Caco-2 (cell line): ENCODE measurements at regions of chr13 and their contacts with region 1.

Region 1: DNA sequence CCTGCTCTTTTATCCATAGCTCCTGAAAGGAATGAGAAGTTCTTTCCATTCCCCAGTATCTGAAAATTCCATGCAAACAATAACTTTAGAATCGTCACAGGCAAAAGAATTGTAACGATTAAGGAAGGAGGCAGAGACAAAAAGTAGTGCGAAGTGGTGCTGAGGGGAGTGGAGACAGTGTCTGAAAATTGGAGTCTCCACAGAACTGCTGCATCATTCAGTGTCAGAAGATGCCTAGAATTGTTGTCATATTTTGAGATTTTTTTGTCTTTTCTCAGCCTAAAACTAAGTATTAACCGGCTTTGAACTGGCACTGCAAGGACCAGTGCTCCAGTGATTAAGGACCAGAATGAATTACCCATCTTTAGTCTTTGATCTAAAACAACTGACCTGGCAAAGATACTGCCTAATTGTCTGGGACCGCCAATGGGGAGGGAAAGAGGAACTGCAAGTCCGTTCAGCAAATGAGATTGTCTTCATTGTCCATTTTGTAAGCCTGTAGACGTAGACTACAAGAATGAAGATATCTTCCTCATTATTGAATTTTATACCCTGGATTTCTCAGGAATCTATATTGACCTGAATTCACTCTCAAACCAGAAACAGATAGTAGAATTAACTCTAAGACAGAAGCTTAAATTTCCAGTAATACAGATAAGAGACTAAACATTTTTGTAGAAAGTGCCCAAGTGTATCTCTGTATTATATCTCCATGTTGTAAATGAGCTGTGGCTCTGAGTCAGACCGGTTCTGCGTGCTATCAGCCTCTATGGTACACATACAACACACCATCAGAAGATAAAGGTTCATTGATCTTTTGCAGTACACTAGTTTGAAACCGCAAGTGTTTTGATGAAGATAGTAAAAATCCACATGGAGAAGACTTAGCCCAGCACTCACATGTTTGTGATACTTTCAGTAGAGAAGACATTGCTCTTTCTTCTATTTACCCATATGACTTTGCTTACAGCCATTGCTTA is 293.2 kb downstream of the EFNB2 start:
- DNase-seq: peak; percentile 63 to 72
- H3K4me3 ChIP-seq: no peak overlapping the region; the same call in 1 of the 2 replicates
- H3K4me3 Mint-ChIP-seq: peak overlapping the region; percentile 69
- H3K27ac Mint-ChIP-seq: peak overlapping the region; percentile 91
- H3K4me1 ChIP-seq: peaks cover 30% of the 10 kb centered on the region
- H3K4me1 Mint-ChIP-seq: peaks cover 31% of the 10 kb centered on the region
- H3K27me3 ChIP-seq: no peaks in the 10 kb centered on the region
- H3K27me3 Mint-ChIP-seq: no peaks in the 10 kb centered on the region
- CTCF ChIP-seq: no peak

Region 2: GRCh38 chr13:106083620-106084350 is 158.5 kb before region 1 on chr13:
- CTCF ChIA-PET with region 1: no interaction called
- POLR2A ChIA-PET with region 1: no interaction called
- intact Hi-C with region 1: loop called (anchors 1 kb)
- DNase-seq: peak; percentile 67 to 69
- H3K4me3 ChIP-seq: no peak overlapping the region
- H3K4me3 Mint-ChIP-seq: no peak overlapping the region
- H3K27ac Mint-ChIP-seq: peak overlapping the region; percentile 25
- H3K4me1 ChIP-seq: peaks cover 24% of the 10 kb centered on the region
- H3K4me1 Mint-ChIP-seq: peaks cover 15% of the 10 kb centered on the region
- H3K27me3 ChIP-seq: no peaks in the 10 kb centered on the region
- H3K27me3 Mint-ChIP-seq: no peaks in the 10 kb centered on the region
- CTCF ChIP-seq: peak; percentile 68 to 71

Region 3: GRCh38 chr13:106182404-106182803 is 59.9 kb before region 1 on chr13:
- CTCF ChIA-PET with region 1: no interaction called
- POLR2A ChIA-PET with region 1: no interaction called
- intact Hi-C with region 1: loop called (anchors 2 kb)
- DNase-seq: no peak
- H3K4me3 ChIP-seq: no peak overlapping the region
- H3K4me3 Mint-ChIP-seq: no peak overlapping the region
- H3K27ac Mint-ChIP-seq: peak overlapping the region; percentile 30
- H3K4me1 ChIP-seq: peaks cover 35% of the 10 kb centered on the region
- H3K4me1 Mint-ChIP-seq: peaks cover 42% of the 10 kb centered on the region
- H3K27me3 ChIP-seq: no peaks in the 10 kb centered on the region
- H3K27me3 Mint-ChIP-seq: no peaks in the 10 kb centered on the region
- CTCF ChIP-seq: no peak

Region 4: DNA sequence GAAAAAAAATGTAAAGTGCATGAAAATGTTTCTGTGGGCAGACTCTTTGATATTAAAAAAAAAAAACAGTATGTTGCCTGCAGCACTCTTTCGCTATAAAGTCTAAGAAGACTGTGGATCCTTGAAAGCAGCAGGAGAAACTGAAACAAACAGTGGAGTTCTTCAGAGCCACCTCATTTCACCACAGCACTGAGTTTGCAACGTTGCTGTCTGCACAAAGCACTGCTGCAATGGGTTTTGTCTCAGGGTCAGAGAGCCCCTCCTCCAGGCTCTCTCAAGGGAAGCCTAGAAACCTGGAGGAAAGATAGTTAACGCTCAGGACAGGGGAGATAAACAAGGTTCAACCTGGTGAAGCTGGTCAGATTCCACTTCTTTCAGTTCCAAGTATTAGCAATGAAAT is 44.5 kb after region 1 on chr13:
- CTCF ChIA-PET with region 1: no interaction called
- POLR2A ChIA-PET with region 1: no interaction called
- intact Hi-C with region 1: no loop called
- DNase-seq: no peak
- H3K4me3 ChIP-seq: no peak overlapping the region
- H3K4me3 Mint-ChIP-seq: no peak overlapping the region
- H3K27ac Mint-ChIP-seq: no peak overlapping the region
- H3K4me1 ChIP-seq: peaks cover 15% of the 10 kb centered on the region
- H3K4me1 Mint-ChIP-seq: peaks cover 19% of the 10 kb centered on the region
- H3K27me3 ChIP-seq: no peaks in the 10 kb centered on the region
- H3K27me3 Mint-ChIP-seq: no peaks in the 10 kb centered on the region
- CTCF ChIP-seq: no peak

Region 5: GRCh38 chr13:106471957-106472543 is 229.8 kb after region 1 on chr13:
- CTCF ChIA-PET with region 1: no interaction called
- POLR2A ChIA-PET with region 1: no interaction called
- intact Hi-C with region 1: loop called (anchors 5 kb)
- DNase-seq: peak; percentile 81 to 93
- H3K4me3 ChIP-seq: peak overlapping the region; percentile 27
- H3K4me3 Mint-ChIP-seq: peak overlapping the region; percentile 71
- H3K27ac Mint-ChIP-seq: peak overlapping the region; percentile 84
- H3K4me1 ChIP-seq: peaks cover 69% of the 10 kb centered on the region
- H3K4me1 Mint-ChIP-seq: peaks cover 48% of the 10 kb centered on the region
- H3K27me3 ChIP-seq: no peaks in the 10 kb centered on the region
- H3K27me3 Mint-ChIP-seq: no peaks in the 10 kb centered on the region
- CTCF ChIP-seq: no peak

Region 6: DNA sequence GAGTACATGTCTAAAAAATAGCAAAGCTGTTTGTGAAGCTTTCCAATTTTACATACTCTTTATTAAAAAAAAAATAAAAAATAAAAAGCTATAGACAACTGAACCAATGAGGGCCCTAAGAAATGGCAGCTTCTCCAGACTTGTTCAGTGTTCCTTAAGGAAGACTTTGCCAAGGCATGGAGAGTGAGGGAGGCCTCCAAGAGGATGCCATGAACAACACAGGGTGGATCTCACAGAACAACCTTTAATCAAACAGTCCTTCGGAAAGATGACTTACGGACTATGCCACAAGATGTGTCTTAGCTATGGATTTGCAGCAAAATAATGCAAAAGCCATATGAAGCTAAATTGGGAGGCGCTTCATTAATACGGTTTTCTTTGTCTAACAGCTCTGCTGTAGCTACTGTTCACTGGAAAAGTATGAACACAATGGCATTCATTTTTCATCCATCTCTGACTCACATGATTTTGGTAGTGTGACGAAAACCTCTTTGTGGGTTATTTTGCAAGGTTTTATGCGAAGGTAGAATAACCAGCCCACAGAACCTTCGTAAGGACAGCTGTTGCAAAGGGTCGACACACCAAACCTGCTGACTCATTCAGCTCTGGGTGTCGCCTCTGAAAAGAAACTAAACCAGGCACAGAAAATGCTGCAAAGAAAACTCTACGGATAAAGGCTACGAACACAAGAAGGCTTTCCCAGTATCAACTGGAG is 265.5 kb after region 1 on chr13:
- CTCF ChIA-PET with region 1: no interaction called
- POLR2A ChIA-PET with region 1: no interaction called
- intact Hi-C with region 1: no loop called
- DNase-seq: no peak
- H3K4me3 ChIP-seq: no peak overlapping the region
- H3K4me3 Mint-ChIP-seq: no peak overlapping the region
- H3K27ac Mint-ChIP-seq: peak overlapping the region; percentile 64
- H3K4me1 ChIP-seq: peaks cover under 1% of the 10 kb centered on the region; the same call in 1 of the 2 replicates
- H3K4me1 Mint-ChIP-seq: peaks cover under 1% of the 10 kb centered on the region
- H3K27me3 ChIP-seq: no peaks in the 10 kb centered on the region
- H3K27me3 Mint-ChIP-seq: no peaks in the 10 kb centered on the region
- CTCF ChIP-seq: no peak

Region 7: GRCh38 chr13:106772006-106772601 is 529.8 kb after region 1 on chr13:
- CTCF ChIA-PET with region 1: no interaction called
- POLR2A ChIA-PET with region 1: no interaction called
- intact Hi-C with region 1: no loop called
- DNase-seq: no peak
- H3K4me3 ChIP-seq: no peak overlapping the region
- H3K4me3 Mint-ChIP-seq: no peak overlapping the region
- H3K27ac Mint-ChIP-seq: no peak overlapping the region
- H3K4me1 ChIP-seq: peaks cover 10% of the 10 kb centered on the region
- H3K4me1 Mint-ChIP-seq: no peaks in the 10 kb centered on the region
- H3K27me3 ChIP-seq: no peaks in the 10 kb centered on the region
- H3K27me3 Mint-ChIP-seq: no peaks in the 10 kb centered on the region
- CTCF ChIP-seq: no peak